Ovary (tissue), 10 donors: ENCODE measurements at regions of chr12 and their contacts with region 1.

Region 1: DNA sequence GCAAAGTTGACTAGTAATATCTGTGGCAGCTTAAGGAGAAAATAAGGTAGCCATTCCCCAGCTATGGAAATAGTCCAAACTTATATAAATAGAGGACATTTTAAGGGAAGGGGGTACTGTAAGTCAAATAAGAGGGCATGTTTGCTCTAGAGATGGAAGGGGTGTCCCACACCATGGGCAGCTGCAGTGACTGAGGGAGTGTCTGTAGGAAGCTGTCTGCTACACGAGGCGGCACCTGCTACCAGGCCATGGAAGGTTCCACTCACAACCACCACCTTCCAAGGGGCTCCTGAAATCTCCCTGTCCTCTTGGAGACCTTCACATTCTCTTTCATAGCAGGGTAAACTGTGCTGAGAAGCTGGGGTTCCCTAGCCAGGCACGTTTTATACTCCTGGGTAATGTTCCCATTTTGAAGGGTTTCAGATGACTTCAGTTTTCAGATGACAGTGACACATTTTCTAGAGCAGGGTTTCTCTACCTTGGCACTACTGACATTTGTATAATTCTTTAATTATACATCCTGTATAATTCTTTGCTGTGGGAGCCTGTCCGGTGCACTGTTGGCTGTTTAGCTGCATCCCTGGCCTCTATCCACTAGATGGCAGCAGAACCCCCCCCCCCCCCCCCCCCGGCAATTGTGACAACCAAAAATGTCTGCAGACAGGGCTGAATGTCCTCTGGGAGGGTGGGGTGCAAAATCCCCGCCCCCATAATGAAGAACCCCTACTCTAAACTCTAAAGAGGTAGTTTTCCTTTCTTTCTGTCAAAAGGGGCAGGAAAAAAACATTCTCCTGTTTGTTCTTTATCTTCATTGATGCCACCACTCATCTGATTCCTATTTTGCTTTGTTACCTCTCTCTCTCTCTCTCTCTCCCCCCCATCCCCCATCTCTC is 11.6 kb upstream of the SMCO2 start:
- DNase-seq: peak in 3 of 5 donors; percentile 23 to 30 (median 28)
- H3K4me3 ChIP-seq: no peak overlapping the region
- H3K27ac ChIP-seq: no peak overlapping the region
- H3K4me1 ChIP-seq: peaks cover 4% of the 10 kb centered on the region
- H3K27me3 ChIP-seq: no peaks in the 10 kb centered on the region
- CTCF ChIP-seq: peak in 2 of 3 donors; percentile 22 to 29
- EP300 ChIP-seq: no peak
- POLR2A ChIP-seq: no peak

Region 2: DNA sequence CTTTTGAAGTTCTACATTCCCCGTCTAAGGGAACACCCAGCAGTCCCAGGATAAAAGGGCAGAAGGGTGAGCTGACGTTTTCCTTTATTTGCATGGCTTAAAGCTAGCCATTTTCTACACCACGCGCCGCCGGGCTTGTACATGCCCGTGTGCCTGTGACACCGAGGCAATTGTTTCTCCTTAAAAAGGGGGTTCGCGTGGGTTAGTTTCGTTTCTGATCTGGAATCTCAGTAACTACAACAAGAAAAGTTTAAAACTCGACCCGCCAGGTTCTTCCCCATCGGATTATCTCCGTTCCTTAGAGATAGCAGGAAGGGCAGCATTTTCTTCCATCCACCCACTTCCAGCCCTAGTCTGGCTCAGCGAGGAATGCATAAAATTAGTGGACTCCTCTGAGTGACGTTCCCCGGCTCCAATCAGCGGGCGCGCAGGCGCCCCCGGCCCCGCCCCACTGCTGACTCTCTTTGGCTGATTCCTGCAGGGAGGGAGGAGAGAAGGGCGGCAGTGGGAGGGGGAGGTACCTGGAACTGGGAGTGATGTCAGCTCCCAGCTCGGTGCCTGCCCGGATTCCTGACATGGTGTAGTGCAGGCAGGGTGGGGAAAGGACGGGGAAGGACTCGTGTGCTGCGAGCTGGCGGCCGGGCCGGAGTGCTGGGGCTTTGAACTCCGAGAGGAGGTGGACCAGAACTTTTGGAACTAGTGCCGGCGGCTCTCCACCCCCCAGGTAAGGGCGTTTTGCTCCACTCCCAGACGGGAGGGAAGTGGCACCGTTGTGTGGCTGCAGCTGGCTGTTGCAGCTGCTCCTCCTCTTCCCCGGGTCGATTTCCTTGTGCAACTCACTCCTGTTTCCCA is 88.9 kb after region 1 on chr12 and contains the start of gene PPFIBP1:
- intact Hi-C with region 1: loop called in 3 of 4 experiments (anchors 10 kb)
- DNase-seq: peak; percentile 99 to 100 (median 100)
- H3K4me3 ChIP-seq: peak within 1 kb of the TSS; percentile 82
- H3K27ac ChIP-seq: peak within 1 kb of the TSS; percentile 47 to 92
- H3K4me1 ChIP-seq: peaks cover 25% of the 10 kb centered on the region
- H3K27me3 ChIP-seq: no peaks in the 10 kb centered on the region
- CTCF ChIP-seq: peak in 1 of 3 donors; percentile 36
- EP300 ChIP-seq: no peak
- POLR2A ChIP-seq: peak; percentile 93
- total RNA-seq, gene PPFIBP1: 105 to 216 (median 162) TPM

Region 3: GRCh38 chr12:27610374-27610773 is 175.5 kb after region 1 on chr12:
- intact Hi-C with region 1: no loop called
- DNase-seq: no peak
- H3K4me3 ChIP-seq: no peak overlapping the region
- H3K27ac ChIP-seq: no peak overlapping the region
- H3K4me1 ChIP-seq: peaks cover 16% of the 10 kb centered on the region
- H3K27me3 ChIP-seq: no peaks in the 10 kb centered on the region
- CTCF ChIP-seq: no peak
- EP300 ChIP-seq: no peak
- POLR2A ChIP-seq: no peak

Region 4: DNA sequence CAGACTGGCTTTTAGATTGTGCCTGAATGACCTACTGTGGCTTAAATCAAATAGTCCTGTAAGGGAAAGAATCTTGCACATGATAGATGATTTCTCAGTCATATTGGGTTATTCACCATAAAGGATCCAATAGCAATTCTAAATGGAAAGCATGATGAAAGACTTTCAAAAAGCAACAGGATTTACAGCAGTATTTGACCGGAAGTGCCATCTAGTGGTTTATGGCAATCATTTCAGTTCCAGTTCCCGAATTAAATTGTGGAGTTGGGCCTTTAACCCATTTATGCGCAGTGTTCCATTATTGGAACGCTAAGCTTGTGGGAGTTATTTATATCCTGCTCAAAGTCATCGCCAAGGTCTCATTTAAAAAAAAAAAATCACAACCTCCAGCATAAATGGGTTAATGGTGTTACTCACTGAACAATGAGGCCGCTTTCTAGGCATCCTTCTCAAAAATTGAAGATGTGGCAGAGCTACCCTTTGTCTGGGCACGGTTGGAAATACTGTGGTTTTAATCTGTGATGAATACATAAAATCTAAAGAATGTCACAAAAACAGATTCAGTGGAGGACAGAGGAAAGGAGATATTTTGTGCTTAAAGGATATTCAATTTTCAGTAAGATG is 200.5 kb after region 1 on chr12:
- intact Hi-C with region 1: loop called in 2 of 4 experiments (anchors 10 kb)
- DNase-seq: no peak
- H3K4me3 ChIP-seq: no peak overlapping the region
- H3K27ac ChIP-seq: no peak overlapping the region
- H3K4me1 ChIP-seq: peaks cover 2% of the 10 kb centered on the region
- H3K27me3 ChIP-seq: no peaks in the 10 kb centered on the region
- CTCF ChIP-seq: peak; percentile 28 to 75 (median 57)
- EP300 ChIP-seq: no peak
- POLR2A ChIP-seq: no peak

Region 5: DNA sequence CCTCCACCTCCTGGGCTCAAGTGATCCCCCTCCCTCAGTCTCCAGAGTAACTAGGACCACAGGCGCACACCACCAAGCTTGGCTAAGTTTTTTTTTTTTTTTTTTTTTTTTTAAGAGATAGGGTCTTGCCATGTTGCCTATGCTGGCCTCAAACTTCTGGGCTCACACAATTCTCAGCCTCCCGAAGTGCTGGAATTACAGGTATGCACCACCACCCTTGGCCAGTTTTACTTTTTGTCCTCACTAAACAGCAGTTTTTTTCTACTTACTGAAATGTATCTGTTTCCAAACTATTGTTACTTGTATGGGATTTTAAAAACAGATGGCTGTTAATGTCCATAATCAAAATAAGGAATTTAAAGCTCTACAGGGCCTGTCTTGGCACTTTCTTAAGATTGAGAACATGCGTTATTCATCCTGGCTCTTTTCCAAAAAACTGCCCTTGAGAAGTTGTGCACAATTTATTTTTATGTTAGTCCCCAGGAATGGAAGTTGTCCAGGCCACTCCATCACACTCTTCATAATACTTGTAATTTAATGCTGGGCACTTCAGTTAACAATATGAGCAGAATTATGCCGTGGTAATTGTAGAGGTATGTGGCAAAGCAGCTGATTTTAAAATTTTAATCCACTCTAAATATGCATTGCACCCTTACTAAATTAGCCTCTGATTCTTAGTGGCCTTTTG is 209.4 kb after region 1 on chr12:
- intact Hi-C with region 1: loop called in 2 of 4 experiments (anchors 10 kb)
- DNase-seq: no peak
- H3K4me3 ChIP-seq: no peak overlapping the region
- H3K27ac ChIP-seq: no peak overlapping the region
- H3K4me1 ChIP-seq: no peaks in the 10 kb centered on the region
- H3K27me3 ChIP-seq: no peaks in the 10 kb centered on the region
- CTCF ChIP-seq: no peak
- EP300 ChIP-seq: no peak
- POLR2A ChIP-seq: no peak

Region 6: DNA sequence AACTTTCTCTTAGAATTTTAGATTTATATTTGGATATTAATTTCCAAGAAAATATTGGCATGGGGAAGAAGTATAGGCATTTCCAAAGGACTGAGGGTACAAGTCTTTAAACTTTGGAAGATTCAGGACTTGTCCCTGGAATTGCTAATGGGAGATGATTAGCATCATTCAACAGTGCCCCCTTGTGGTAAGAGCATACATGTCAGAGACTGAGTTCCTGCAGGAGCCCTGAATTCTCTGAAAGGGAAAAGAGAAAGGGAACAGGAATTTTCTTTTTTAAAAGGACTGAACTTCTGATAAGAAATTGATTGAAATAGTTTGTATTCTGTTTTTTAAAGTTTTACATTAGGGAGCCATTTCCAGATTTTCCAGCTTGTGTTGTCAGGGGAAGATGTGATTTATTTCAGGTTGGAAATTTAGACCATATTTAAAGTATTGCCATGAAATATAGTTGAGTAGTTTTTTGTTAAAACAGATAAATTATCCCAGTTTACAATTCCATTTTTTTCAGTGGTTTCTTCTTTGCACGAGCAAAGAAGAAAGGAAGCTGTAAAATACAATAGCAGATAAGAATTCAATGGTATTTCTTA is 217.3 kb after region 1 on chr12:
- intact Hi-C with region 1: loop called in 3 of 4 experiments (anchors 5 to 10 kb)
- DNase-seq: peak in 3 of 5 donors; percentile 37 to 69 (median 55)
- H3K4me3 ChIP-seq: no peak overlapping the region
- H3K27ac ChIP-seq: no peak overlapping the region
- H3K4me1 ChIP-seq: no peaks in the 10 kb centered on the region
- H3K27me3 ChIP-seq: no peaks in the 10 kb centered on the region
- CTCF ChIP-seq: peak; percentile 70 to 86 (median 75)
- EP300 ChIP-seq: no peak
- POLR2A ChIP-seq: no peak